Breast epithelium (tissue), 4 donors: ENCODE measurements at regions of chr2 and their contacts with region 1.

Region 1: GRCh38 chr2:49714454-49714853 is 560.1 kb upstream of the FSHR start:
- DNase-seq: no peak
- H3K4me3 ChIP-seq: no peak overlapping the region
- H3K27ac ChIP-seq: no peak overlapping the region
- H3K4me1 ChIP-seq: no peaks in the 10 kb centered on the region
- H3K27me3 ChIP-seq: no peaks in the 10 kb centered on the region
- CTCF ChIP-seq: no peak
- POLR2A ChIP-seq: no peak

Region 2: GRCh38 chr2:49677227-49677626 is 37.2 kb before region 1 on chr2:
- intact Hi-C with region 1: loop called (anchors 1 kb)
- DNase-seq: no peak
- H3K4me3 ChIP-seq: no peak overlapping the region
- H3K27ac ChIP-seq: no peak overlapping the region
- H3K4me1 ChIP-seq: no peaks in the 10 kb centered on the region
- H3K27me3 ChIP-seq: no peaks in the 10 kb centered on the region
- CTCF ChIP-seq: no peak
- POLR2A ChIP-seq: no peak

Region 3: GRCh38 chr2:50126845-50127244 is 412.4 kb after region 1 on chr2:
- intact Hi-C with region 1: no loop called
- DNase-seq: peak; percentile 52 to 63
- H3K4me3 ChIP-seq: no peak overlapping the region
- H3K27ac ChIP-seq: peak overlapping the region in 1 of 2 donors; percentile 78
- H3K4me1 ChIP-seq: peaks cover 0 to 5% of the 10 kb centered on the region in 2 donors
- H3K27me3 ChIP-seq: no peaks in the 10 kb centered on the region
- CTCF ChIP-seq: no peak
- POLR2A ChIP-seq: no peak

Region 4: DNA sequence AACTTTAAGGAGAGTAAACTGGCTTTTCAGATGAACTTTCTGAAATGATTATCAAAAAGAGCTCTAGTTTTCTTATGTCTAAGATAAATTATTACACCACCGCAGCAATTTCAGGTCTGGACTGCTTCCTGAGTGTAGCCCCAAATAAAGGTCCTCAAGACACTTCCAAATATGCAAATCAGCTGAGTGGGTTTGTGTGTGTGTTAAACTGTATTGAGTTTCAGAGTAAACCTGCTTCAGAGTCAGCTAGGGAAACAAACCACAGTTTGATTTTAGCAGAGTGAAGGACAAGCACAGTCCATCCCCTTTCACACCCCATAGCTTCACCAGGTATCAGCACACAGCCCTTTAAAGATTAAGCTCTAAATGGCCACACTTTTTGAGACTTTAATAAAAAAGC is 1148.8 kb after region 1 on chr2:
- intact Hi-C with region 1: no loop called
- DNase-seq: no peak
- H3K4me3 ChIP-seq: no peak overlapping the region
- H3K27ac ChIP-seq: no peak overlapping the region
- H3K4me1 ChIP-seq: no peaks in the 10 kb centered on the region
- H3K27me3 ChIP-seq: no peaks in the 10 kb centered on the region
- CTCF ChIP-seq: no peak
- POLR2A ChIP-seq: no peak